ENCODE measurements at regions of chr5 and their contacts with region 1.

Region 1: DNA sequence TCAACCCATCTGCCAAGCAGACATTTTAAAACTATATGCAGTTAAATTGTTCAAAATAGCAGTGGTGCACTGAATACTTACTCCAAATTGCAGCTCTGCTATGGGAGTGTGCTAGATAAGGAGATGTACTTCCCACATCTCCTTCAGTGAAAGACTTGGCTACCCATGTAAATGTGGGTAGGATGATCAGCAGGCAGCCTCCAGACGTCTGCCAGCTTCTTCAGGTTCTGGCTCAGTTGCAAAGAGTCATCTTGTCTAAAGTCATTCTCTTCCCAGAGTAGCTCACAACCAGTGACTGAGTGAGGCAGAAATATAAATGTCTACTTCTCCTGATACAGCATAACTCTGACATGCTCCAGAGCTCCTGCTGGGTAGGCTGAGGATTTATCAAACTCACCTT is 1050.0 kb upstream of the CDH10 start:
- DNase-seq: no peak
- H3K4me3 ChIP-seq: no peak overlapping the region
- H3K27ac ChIP-seq: no peak overlapping the region
- H3K4me1 ChIP-seq: no peaks in the 10 kb centered on the region
- H3K27me3 ChIP-seq: no peaks in the 10 kb centered on the region
- CTCF ChIP-seq: no peak
- POLR2A ChIP-seq: no peak

Region 2: DNA sequence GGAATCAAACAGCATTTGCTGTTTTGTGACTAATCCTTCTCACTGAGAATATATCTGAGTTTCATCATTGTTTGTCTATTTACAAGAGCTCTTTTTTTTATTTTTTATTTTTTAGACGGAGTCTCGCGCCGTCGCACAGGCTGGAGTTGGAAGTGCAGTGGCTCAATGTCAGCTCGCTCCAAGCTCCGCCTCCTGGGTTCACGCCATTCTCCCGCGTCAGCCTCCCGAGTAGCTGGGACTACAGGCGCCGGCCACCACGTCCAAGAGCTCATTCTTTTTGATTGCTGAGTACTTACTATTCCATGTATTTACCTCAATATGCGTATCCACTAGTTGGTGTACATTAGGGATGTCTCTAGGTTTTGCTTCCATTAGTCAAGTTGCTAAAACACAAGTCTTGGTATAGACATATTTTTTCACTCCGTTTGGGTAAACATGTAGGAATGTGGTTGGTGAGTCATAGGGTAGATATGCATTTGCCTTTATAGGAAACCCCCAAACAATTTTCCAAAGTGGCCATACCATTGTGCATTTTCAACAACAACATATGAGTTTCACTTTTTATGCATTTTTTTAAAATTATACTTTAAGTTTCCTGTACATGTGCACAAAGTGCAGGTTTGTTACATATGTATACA is 45.1 kb before region 1 on chr5:
- intact Hi-C with region 1: loop called (anchors 2 kb)
- DNase-seq: no peak
- H3K4me3 ChIP-seq: no peak overlapping the region
- H3K27ac ChIP-seq: no peak overlapping the region
- H3K4me1 ChIP-seq: no peaks in the 10 kb centered on the region
- H3K27me3 ChIP-seq: no peaks in the 10 kb centered on the region
- CTCF ChIP-seq: no peak
- POLR2A ChIP-seq: no peak